Breast epithelium (tissue), 4 donors: ENCODE measurements at regions of chr2 and their contacts with region 1.

Region 1: DNA sequence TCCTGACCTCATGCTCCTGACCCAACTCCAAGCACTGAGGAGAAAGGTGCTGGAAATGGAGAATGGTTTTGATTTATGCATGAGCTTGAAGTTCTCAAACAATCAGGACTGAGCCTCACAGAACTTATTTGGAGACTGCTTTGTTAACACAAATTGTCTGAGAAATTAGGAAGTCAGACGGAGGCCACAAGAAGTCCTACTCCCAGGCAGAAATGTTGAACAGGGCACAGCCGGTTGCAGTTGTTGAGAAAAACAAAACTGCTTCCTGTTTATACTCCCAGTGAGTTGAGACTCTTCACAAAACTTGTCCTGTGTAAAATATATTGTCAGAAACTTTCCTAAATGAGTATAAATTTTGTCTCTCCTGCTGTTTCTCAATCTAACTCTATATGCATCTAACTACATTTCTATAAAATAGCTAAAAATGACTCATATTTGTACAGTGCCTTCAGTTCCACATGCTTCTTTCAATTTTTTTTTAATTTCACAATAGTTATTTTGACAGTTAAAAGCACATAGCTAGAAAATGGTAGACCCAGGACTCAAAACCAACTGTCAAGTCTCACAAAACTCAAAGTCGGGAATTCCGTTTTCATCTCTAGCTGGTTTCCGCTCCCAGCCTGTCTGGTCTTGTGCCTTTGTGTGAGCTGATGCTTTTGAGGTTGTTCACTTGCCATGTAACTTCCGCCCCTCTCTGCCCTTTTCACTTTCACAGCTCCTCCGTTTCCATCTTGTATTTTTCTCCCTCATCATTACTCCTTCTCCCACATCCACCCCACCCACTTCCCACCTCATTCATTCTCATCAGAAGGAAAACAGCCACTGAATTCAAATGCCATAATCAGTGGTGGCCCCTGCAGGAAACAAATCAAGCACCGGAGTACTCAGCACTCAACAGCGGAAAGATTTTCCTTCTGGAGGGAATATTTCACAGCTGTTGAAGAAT is 215.0 kb downstream of the SUCLG1 start:
- DNase-seq: no peak
- H3K4me3 ChIP-seq: no peak overlapping the region
- H3K27ac ChIP-seq: no peak overlapping the region
- H3K4me1 ChIP-seq: no peaks in the 10 kb centered on the region
- H3K27me3 ChIP-seq: no peaks in the 10 kb centered on the region
- CTCF ChIP-seq: no peak
- POLR2A ChIP-seq: no peak

Region 2: DNA sequence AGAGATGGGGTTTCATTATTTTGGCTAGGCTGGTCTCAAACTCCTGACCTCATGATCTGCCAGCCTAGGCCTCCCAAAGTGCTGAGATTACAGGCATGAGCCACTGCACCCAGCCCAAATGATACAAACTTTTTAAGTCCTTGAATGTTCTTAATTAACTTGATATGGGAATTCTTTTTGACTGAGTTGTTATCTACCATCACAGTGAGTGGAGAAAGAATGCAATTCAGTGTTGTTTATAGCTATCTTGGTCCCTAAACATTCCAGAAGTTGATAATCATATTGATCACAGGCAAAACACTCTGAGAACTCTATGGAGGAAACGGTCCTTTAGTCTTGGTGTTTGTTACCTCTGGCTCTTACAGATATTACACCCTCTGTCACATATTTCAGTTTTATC is 857.5 kb before region 1 on chr2:
- intact Hi-C with region 1: loop called (anchors 5 kb)
- DNase-seq: no peak
- H3K4me3 ChIP-seq: no peak overlapping the region
- H3K27ac ChIP-seq: no peak overlapping the region
- H3K4me1 ChIP-seq: no peaks in the 10 kb centered on the region
- H3K27me3 ChIP-seq: no peaks in the 10 kb centered on the region
- CTCF ChIP-seq: no peak
- POLR2A ChIP-seq: no peak

Region 3: DNA sequence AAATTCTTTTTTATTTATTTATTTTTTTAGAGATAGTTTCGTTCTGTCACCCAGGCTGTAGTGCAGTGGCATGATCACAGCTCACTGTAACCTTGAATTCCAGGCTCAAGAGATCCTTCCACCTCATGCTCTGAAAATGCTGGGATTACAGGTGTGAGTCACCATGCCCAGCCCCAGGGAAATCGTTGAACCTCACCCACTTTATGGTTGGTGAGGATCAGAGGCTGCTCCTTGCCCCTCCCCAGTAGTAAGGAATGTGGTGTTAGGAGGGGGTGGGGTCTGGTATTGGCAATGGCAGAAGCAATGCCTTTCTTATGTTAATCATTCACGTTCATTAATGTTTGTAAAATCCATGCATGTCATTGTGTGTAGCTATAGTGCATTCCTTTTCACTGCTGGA is 53.1 kb after region 1 on chr2:
- intact Hi-C with region 1: no loop called
- DNase-seq: no peak
- H3K4me3 ChIP-seq: no peak overlapping the region
- H3K27ac ChIP-seq: no peak overlapping the region
- H3K4me1 ChIP-seq: no peaks in the 10 kb centered on the region
- H3K27me3 ChIP-seq: no peaks in the 10 kb centered on the region
- CTCF ChIP-seq: no peak
- POLR2A ChIP-seq: no peak

Region 4: DNA sequence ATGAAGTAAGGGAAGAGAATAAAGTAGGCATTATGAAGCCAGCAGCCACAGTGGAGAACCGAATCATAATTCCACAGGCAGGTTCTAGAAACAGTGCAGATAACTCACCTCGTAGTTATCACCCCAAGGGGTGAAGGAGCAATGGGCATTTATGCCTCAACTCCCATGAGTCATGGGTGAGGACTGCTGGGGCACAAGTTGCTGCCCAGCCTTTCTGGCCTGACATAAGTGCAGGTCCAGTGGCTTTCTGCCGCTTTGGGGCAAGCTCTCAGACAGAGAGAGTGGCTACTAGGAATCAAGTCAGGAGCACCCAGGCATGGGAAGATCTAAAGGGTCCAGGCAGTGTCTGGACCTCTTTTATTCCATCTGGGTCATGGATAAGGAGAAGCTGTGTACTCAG is 65.2 kb after region 1 on chr2:
- intact Hi-C with region 1: no loop called
- DNase-seq: no peak
- H3K4me3 ChIP-seq: no peak overlapping the region
- H3K27ac ChIP-seq: no peak overlapping the region
- H3K4me1 ChIP-seq: no peaks in the 10 kb centered on the region
- H3K27me3 ChIP-seq: peaks cover 0 to 3% of the 10 kb centered on the region in 2 donors
- CTCF ChIP-seq: no peak
- POLR2A ChIP-seq: no peak